AG04449 (cell line): ENCODE measurements at regions of chr22 and their contacts with region 1.

Region 1: GRCh38 chr22:26711205-26711963 is 54.0 kb downstream of the MIAT start:
- DNase-seq: no peak
- H3K4me3 ChIP-seq: no peak overlapping the region
- CTCF ChIP-seq: no peak

Region 2: GRCh38 chr22:26672590-26673468 is 38.6 kb before region 1 on chr22:
- CTCF ChIA-PET with region 1: interaction called, 12 read pairs
- POLR2A ChIA-PET with region 1: no interaction called
- DNase-seq: peak; percentile 71
- H3K4me3 ChIP-seq: peak overlapping the region; percentile 95
- CTCF ChIP-seq: peak; percentile 70